ENCODE measurements at regions of chr22 and their contacts with region 1.

Region 1: DNA sequence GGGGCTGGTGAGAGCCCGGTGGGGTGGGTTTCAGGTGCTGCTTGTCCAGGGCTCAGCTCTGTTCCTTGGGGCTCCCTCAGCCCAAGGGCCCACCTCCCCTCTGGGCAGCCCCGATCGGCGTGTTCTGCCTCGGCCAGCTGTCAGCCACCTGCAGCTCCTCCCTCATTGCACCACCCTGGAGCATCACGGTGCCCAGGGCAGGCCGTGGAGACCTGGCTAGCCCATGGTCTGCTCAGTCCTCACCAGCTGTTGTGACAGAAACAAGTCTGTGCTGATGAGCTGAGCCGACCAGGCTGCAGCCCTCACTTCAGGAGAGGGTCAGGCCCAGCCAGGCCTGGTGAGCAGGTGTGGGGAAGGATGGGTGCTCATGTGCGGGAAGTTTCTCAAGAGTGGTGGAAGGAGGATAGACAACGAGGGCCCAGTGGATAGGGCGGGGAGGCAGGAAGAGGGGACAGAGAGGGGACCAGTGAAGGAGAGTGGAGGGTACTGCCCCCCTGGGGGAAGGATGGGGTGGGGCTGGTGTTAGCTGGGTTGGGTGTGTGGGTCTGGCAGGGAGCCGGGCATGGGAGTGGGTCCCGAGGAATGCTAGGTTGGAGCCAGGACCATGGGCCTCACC is 16.5 kb upstream of the RTN4R start:
- DNase-seq: no peak
- ATAC-seq: no peak
- H3K4me3 ChIP-seq: no peak overlapping the region
- H3K27ac ChIP-seq: no peak overlapping the region
- H3K4me1 ChIP-seq: no peaks in the 10 kb centered on the region
- H3K27me3 ChIP-seq: no peaks in the 10 kb centered on the region
- CTCF ChIP-seq: no peak
- EP300 ChIP-seq: no peak
- POLR2A ChIP-seq: no peak
- RAD21 ChIP-seq: no peak

Region 2: GRCh38 chr22:18954990-18955571 is 1329.5 kb before region 1 on chr22:
- CTCF ChIA-PET with region 1: no interaction called
- POLR2A ChIA-PET with region 1: no interaction called
- RAD21 ChIA-PET with region 1: no interaction called
- SMC1A ChIA-PET with region 1: no interaction called
- in situ Hi-C with region 1: loop called (anchors 5 kb)
- intact Hi-C with region 1: no loop called
- DNase-seq: no peak
- ATAC-seq: no peak; the same call in 2 of the 3 replicates
- H3K4me3 ChIP-seq: no peak overlapping the region
- H3K27ac ChIP-seq: no peak overlapping the region
- H3K4me1 ChIP-seq: no peaks in the 10 kb centered on the region
- H3K27me3 ChIP-seq: no peaks in the 10 kb centered on the region
- CTCF ChIP-seq: no peak
- EP300 ChIP-seq: no peak
- POLR2A ChIP-seq: no peak
- RAD21 ChIP-seq: no peak

Measured in GM12878 (cell line).